ENCODE measurements at regions of chr17 and their contacts with region 1.

Region 1: GRCh38 chr17:49191917-49192741 is 18.2 kb downstream of the GNGT2 start:
- DNase-seq: peak; percentile 93
- H3K4me3 Mint-ChIP-seq: peak overlapping the region; percentile 96
- H3K27ac Mint-ChIP-seq: peak overlapping the region; percentile 96
- H3K4me1 Mint-ChIP-seq: no peaks in the 10 kb centered on the region
- H3K27me3 Mint-ChIP-seq: no peaks in the 10 kb centered on the region
- CTCF ChIP-seq: peak; percentile 21

Region 2: GRCh38 chr17:48892940-48893645 is 299.0 kb before region 1 on chr17:
- CTCF ChIA-PET with region 1: no interaction called
- POLR2A ChIA-PET with region 1: interaction called, 13 read pairs
- intact Hi-C with region 1: no loop called
- DNase-seq: no peak
- H3K4me3 Mint-ChIP-seq: peak overlapping the region; percentile 99
- H3K27ac Mint-ChIP-seq: peak overlapping the region; percentile 95
- H3K4me1 Mint-ChIP-seq: no peaks in the 10 kb centered on the region
- H3K27me3 Mint-ChIP-seq: no peaks in the 10 kb centered on the region
- CTCF ChIP-seq: no peak

Region 3: DNA sequence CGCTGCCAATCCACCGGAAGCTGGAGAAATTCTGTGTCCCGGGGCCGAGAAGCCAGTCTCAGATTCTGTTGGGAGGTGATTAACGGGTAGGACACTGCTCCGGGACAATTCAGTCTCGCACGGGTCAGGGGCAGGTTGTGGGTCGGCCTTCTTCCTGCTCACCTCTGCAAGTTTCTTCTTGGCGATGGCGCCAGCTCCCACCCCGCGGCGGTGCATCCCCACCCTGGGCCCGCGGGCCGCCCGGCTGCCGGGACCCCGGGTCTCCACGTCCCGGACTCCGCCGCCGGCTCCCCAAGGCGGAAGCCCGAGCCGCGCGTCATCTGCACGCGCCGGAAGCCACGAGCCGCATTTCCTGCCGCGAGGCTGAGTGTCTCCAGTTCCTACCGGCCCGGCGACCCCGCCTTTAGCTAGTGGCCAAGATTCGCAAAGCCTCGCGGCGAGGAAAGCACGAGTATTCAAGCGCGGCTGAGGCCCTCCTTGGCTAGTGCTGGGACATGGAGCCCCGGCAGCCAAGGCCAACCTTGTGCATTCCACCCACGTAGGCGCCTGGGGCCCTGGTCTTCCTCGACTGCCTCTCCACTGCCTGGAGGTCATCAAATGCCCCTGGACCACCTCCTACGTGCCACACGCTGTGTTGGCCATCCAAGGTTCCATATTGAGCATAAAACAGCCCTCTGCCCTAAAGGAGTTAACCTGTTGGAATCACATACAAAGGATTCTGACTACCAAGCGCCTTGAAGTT is 247.4 kb before region 1 on chr17 and contains the start of gene SNF8:
- CTCF ChIA-PET with region 1: no interaction called
- POLR2A ChIA-PET with region 1: interaction called, 11 read pairs
- intact Hi-C with region 1: no loop called
- DNase-seq: peak; percentile 86
- H3K4me3 Mint-ChIP-seq: peak within 1 kb of the TSS; percentile 89
- H3K27ac Mint-ChIP-seq: peak within 1 kb of the TSS; percentile 83
- H3K4me1 Mint-ChIP-seq: no peaks in the 10 kb centered on the region
- H3K27me3 Mint-ChIP-seq: no peaks in the 10 kb centered on the region
- CTCF ChIP-seq: no peak
- total RNA-seq, gene SNF8: 156 and 184 TPM in 2 replicates

Region 4: GRCh38 chr17:49101054-49101947 is 90.8 kb before region 1 on chr17:
- CTCF ChIA-PET with region 1: no interaction called
- POLR2A ChIA-PET with region 1: interaction called, 14 read pairs
- intact Hi-C with region 1: no loop called
- DNase-seq: no peak
- H3K4me3 Mint-ChIP-seq: no peak overlapping the region
- H3K27ac Mint-ChIP-seq: peak overlapping the region; percentile 74
- H3K4me1 Mint-ChIP-seq: peaks cover 18% of the 10 kb centered on the region
- H3K27me3 Mint-ChIP-seq: no peaks in the 10 kb centered on the region
- CTCF ChIP-seq: no peak

Region 5: DNA sequence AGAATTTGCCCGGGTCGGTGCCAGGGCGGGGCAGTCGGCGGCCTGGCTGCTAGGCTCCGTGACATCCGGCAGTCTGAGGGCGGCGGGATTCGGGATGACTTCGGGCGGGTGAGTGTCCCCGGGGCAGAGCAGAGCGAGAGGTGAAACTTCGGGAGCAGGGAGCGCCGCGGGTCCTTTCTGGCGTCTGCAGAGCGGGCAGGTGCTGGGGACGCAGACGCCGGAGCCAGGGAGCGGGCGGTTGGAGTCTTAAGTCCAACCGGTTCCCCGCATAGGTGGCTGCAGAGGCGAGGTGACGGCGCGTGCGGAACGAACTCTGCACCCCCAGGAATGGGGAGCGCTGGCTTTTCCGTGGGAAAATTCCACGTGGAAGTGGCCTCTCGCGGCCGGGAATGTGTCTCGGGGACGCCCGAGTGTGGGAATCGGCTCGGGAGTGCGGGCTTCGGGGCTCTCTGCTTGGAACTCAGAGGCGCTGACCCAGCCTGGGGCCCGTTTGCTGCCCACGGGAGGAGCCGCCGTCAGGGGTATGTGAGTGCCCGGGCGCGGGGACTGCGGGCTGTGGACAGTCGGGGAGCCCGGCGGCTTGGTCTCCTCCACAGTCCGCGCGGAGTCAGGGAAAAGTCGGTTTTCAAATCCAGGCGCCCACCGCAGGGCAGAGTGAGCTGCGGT is 59.3 kb before region 1 on chr17 and contains the start of gene B4GALNT2:
- CTCF ChIA-PET with region 1: no interaction called
- POLR2A ChIA-PET with region 1: interaction called, 23 read pairs
- intact Hi-C with region 1: no loop called
- DNase-seq: no peak
- H3K4me3 Mint-ChIP-seq: peak within 1 kb of the TSS; percentile 29
- H3K27ac Mint-ChIP-seq: no peak within 1 kb of the TSS
- H3K4me1 Mint-ChIP-seq: peaks cover 12% of the 10 kb centered on the region
- H3K27me3 Mint-ChIP-seq: no peaks in the 10 kb centered on the region
- CTCF ChIP-seq: no peak
- total RNA-seq, gene B4GALNT2: 0.05 TPM in 1 of 2 replicates, not detected in the other

Region 6: DNA sequence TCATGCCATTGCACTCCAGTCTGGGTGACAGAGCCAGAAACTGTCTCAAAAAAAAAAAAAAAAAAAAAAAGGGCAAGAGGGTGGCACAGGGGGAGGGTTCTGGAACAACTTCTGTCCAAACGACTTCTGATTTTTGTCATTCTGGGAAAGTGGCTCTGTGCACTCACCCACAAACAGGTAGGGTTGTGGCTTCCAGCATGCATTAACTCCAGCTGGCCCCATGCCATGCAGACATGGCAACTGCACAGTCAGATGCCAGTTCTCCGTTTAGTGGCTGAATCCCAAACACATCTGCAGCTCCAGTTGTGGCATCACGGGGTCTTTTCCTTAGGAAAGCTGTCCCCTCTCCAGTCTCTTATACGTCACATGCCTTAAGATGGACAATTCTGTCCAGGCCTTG is 29.3 kb before region 1 on chr17:
- CTCF ChIA-PET with region 1: no interaction called
- POLR2A ChIA-PET with region 1: no interaction called
- intact Hi-C with region 1: no loop called
- DNase-seq: no peak
- H3K4me3 Mint-ChIP-seq: no peak overlapping the region
- H3K27ac Mint-ChIP-seq: no peak overlapping the region
- H3K4me1 Mint-ChIP-seq: no peaks in the 10 kb centered on the region
- H3K27me3 Mint-ChIP-seq: peaks cover 48% of the 10 kb centered on the region
- CTCF ChIP-seq: no peak

Region 7: GRCh38 chr17:49788478-49789242 is 596.5 kb after region 1 on chr17 and contains the start of gene KAT7:
- CTCF ChIA-PET with region 1: no interaction called
- POLR2A ChIA-PET with region 1: no interaction called
- intact Hi-C with region 1: no loop called
- DNase-seq: peak; percentile 99
- H3K4me3 Mint-ChIP-seq: peak within 1 kb of the TSS; percentile 93
- H3K27ac Mint-ChIP-seq: peak within 1 kb of the TSS; percentile 98
- H3K4me1 Mint-ChIP-seq: peaks cover 17% of the 10 kb centered on the region
- H3K27me3 Mint-ChIP-seq: no peaks in the 10 kb centered on the region
- CTCF ChIP-seq: no peak
- total RNA-seq, gene KAT7: 45.1 and 53.7 TPM in 2 replicates

Region 8: DNA sequence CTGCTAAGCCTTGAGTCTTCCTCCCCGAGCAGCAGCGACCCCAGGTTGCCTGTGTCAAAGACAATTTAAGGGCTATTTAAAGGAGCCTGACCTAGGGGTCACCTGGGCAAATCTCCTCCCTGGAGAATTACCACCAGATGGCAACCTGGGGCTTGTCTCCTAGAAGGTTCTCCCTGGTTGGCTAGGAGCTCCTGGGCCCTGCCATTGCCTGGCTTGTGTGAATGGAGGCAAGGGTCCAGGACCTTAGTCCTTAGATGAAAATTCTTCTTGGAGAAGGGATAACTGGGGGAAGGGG is 707.0 kb after region 1 on chr17:
- CTCF ChIA-PET with region 1: no interaction called
- POLR2A ChIA-PET with region 1: no interaction called
- intact Hi-C with region 1: no loop called
- DNase-seq: peak; percentile 36
- H3K4me3 Mint-ChIP-seq: no peak overlapping the region
- H3K27ac Mint-ChIP-seq: no peak overlapping the region
- H3K4me1 Mint-ChIP-seq: peaks cover 6% of the 10 kb centered on the region
- H3K27me3 Mint-ChIP-seq: peaks cover 24% of the 10 kb centered on the region
- CTCF ChIP-seq: peak; percentile 21